Heart left ventricle (tissue), 16 donors: ENCODE measurements at regions of chr18 and their contacts with region 1.

Region 1: DNA sequence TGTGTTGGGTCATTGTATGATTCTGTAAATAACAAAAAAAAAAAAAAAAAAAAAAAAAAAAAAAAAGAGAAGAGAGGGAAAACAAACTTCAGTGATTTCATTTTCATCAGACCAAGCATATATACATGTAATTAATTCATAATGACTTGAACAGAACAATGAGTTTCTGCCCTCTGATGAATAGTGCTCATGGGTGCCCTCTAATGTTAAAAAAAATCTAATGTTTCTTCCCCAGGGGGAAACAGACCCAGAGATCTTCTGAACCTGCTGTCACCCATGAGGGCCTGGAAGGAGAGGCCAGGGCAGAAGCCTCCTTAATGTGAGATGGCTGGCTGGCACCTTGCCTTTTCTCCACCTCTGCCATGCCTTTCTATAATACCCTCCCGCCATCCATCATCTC is 289.2 kb downstream of the ZNF521 start:
- DNase-seq: no peak
- ATAC-seq: no peak
- H3K4me3 ChIP-seq: no peak overlapping the region
- H3K27ac ChIP-seq: no peak overlapping the region
- H3K4me1 ChIP-seq: peaks cover 0 to 6% (median 0%) of the 10 kb centered on the region in 12 donors
- H3K27me3 ChIP-seq: no peaks in the 10 kb centered on the region
- CTCF ChIP-seq: peak in 1 of 12 donors; percentile 15
- POLR2A ChIP-seq: no peak

Region 2: GRCh38 chr18:24885276-24885675 is 177.4 kb before region 1 on chr18:
- intact Hi-C with region 1: loop called in 1 of 10 experiments (anchors 10 kb)
- DNase-seq: no peak
- ATAC-seq: no peak
- H3K4me3 ChIP-seq: no peak overlapping the region
- H3K27ac ChIP-seq: no peak overlapping the region
- H3K4me1 ChIP-seq: peaks cover 0 to 4% (median 0%) of the 10 kb centered on the region in 12 donors
- H3K27me3 ChIP-seq: no peaks in the 10 kb centered on the region
- CTCF ChIP-seq: no peak
- POLR2A ChIP-seq: no peak

Region 3: DNA sequence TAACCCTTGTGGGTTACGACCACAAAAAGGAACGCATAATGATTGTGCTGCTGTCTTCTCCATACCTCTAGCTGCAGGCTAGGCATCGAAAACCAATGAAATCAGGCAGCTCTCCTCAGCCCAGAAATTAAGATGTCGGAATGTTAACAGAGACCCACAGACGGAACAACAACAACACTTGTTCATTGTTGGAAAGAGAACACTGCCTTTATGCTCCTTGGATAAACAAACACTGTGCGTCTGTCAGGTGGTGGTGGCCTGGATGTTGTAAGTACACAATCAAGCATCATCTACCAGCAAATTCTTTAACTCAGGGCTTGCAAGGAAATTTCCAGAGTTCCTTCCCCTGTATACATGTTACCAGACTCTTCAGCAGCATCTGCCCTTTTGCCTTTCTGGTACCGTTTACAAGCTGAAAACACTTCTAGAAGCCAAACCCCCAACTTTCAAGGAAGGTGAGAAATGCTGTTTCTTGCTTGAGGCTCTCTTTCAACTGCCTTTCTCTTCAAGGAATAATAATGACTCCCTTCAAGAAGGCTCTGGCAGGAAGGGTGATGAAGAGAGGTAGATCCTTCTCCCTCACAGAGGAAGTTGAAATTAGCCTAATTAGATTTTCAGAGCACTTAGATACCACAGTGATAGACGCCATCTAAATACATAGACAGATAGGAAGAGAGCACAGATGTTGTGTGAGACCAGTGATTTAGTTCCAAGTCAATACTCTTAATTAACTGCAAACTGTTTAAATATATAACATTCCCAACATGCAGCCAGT is 43.4 kb before region 1 on chr18:
- intact Hi-C with region 1: no loop called
- DNase-seq: no peak
- ATAC-seq: no peak
- H3K4me3 ChIP-seq: no peak overlapping the region
- H3K27ac ChIP-seq: no peak overlapping the region
- H3K4me1 ChIP-seq: no peaks in the 10 kb centered on the region
- H3K27me3 ChIP-seq: no peaks in the 10 kb centered on the region
- CTCF ChIP-seq: no peak
- POLR2A ChIP-seq: no peak

Region 4: DNA sequence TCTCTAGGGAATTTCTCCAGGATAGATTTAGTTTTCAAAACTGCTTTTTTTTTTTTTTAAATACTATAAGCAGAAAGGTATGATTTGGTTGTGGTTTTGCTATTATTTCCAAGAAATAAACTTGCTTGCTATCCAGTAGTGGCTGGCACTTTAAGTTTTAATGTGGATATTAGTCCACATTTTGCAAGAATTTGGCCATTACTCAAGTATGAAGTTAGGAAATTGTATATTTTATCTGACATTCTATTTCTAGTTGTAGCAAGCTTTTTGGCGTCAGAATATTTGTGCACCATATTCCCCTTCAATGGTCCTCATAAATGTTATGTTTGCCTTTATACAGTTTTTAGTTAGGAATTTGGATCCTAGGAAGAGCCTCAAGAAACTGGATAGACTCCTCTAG is 63.0 kb after region 1 on chr18:
- intact Hi-C with region 1: loop called in 1 of 10 experiments (anchors 10 kb)
- DNase-seq: no peak
- ATAC-seq: no peak
- H3K4me3 ChIP-seq: no peak overlapping the region
- H3K27ac ChIP-seq: no peak overlapping the region
- H3K4me1 ChIP-seq: peaks cover 0 to 25% (median 4%) of the 10 kb centered on the region in 12 donors
- H3K27me3 ChIP-seq: no peaks in the 10 kb centered on the region
- CTCF ChIP-seq: no peak
- POLR2A ChIP-seq: no peak

Region 5: GRCh38 chr18:26764628-26765027 is 1701.9 kb after region 1 on chr18:
- intact Hi-C with region 1: no loop called
- DNase-seq: no peak
- ATAC-seq: no peak
- H3K4me3 ChIP-seq: no peak overlapping the region
- H3K27ac ChIP-seq: no peak overlapping the region
- H3K4me1 ChIP-seq: no peaks in the 10 kb centered on the region
- H3K27me3 ChIP-seq: no peaks in the 10 kb centered on the region
- CTCF ChIP-seq: no peak
- POLR2A ChIP-seq: no peak